HCT116 (cell line): ENCODE measurements at regions of chr16 and their contacts with region 1.

Region 1: DNA sequence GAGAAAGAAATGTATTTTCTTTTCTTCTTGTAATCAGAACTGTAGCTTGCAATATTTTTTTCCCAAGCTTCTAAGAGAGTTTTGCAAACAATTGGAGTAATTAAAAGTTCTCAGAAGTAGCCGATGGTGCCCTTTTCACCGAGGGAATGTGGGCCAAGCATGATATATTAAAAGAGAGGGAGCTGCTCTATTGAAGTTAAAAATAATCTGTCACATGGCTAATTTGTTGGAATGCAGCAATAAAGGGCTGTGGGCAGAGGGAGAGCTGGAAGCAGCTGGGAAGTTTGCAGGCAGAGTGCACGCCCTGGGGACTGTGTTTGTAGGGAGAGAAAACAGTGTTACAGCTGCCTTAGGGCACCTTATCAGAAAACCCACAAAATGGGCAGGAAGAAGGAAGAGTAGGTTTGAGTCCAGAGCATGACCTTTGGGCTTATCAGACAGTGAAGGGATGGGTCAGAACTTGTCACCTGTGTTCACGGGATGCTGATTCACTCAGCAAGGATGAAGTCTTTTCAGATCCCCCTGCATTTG is 18.5 kb upstream of the TERF2 start:
- DNase-seq: peak; percentile 95
- ATAC-seq: peak; percentile 72
- H3K4me3 ChIP-seq: peak overlapping the region in 1 of 2 experiments; percentile 28; a peak in 1 of 4 replicates
- H3K27ac ChIP-seq: peak overlapping the region; percentile 99
- H3K4me1 ChIP-seq: peaks cover 82 to 99% of the 10 kb centered on the region in 2 experiments
- H3K27me3 ChIP-seq: no peaks in the 10 kb centered on the region
- CTCF ChIP-seq: no peak
- POLR2A ChIP-seq: no peak
- RAD21 ChIP-seq: no peak

Region 2: GRCh38 chr16:69386596-69386995 is 17.7 kb before region 1 on chr16:
- CTCF ChIA-PET with region 1: no interaction called
- POLR2A ChIA-PET with region 1: interaction called, 12 read pairs
- RAD21 ChIA-PET with region 1: no interaction called
- intact Hi-C with region 1: no loop called
- DNase-seq: no peak
- ATAC-seq: no peak
- H3K4me3 ChIP-seq: peak overlapping the region; percentile 64 to 78
- H3K27ac ChIP-seq: peak overlapping the region; percentile 83
- H3K4me1 ChIP-seq: peaks cover 28 to 43% of the 10 kb centered on the region in 2 experiments
- H3K27me3 ChIP-seq: no peaks in the 10 kb centered on the region
- CTCF ChIP-seq: no peak
- POLR2A ChIP-seq: no peak
- RAD21 ChIP-seq: no peak

Region 3: DNA sequence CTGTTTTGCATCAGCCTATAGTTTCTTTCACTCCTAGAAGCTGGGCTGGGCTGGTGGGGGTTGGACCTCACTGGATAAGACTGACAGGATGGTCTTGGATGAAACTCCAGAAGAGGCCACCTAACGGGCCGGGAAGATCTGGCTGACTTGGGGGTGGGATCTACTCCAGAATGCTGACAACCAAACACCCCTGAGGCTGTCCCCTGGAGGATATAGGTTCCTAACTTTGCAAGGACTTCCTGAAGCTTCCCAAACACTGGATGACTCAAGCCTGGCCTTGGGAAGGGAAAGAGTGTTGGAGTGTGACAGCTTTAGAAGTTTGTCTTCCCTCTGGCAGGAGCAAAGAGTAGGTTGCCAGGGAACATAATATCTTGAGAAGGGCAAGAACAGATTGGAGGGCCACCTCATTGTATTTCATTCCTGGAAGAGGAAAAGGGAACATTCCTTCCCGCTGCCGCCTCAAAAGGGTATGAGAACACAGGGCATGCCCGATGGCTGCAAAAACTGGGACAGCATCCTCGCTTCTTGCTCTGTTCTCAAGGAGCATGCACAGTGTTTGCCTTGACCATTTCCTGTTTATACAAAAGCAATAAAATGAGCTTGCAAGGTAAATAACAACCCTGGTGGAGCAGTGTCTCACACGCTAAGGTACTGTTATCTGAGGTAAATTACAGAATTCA is 13.3 kb after region 1 on chr16:
- CTCF ChIA-PET with region 1: interaction called, 4 read pairs
- POLR2A ChIA-PET with region 1: interaction called, 22 read pairs
- RAD21 ChIA-PET with region 1: no interaction called
- intact Hi-C with region 1: no loop called
- DNase-seq: no peak
- ATAC-seq: peak; percentile 74
- H3K4me3 ChIP-seq: no peak overlapping the region
- H3K27ac ChIP-seq: peak overlapping the region; percentile 99
- H3K4me1 ChIP-seq: peaks cover 60 to 73% of the 10 kb centered on the region in 2 experiments
- H3K27me3 ChIP-seq: no peaks in the 10 kb centered on the region
- CTCF ChIP-seq: no peak
- POLR2A ChIP-seq: peak; percentile 45
- RAD21 ChIP-seq: no peak

Region 4: GRCh38 chr16:69424053-69424934 is 20.0 kb after region 1 on chr16 and contains the start of gene CYB5B:
- CTCF ChIA-PET with region 1: no interaction called
- POLR2A ChIA-PET with region 1: interaction called, 18 read pairs
- RAD21 ChIA-PET with region 1: interaction called in 1 of 2 experiments, 3 read pairs
- intact Hi-C with region 1: no loop called
- DNase-seq: peak; percentile 100
- ATAC-seq: peak; percentile 91
- H3K4me3 ChIP-seq: peak within 1 kb of the TSS; percentile 82 to 99
- H3K27ac ChIP-seq: peak within 1 kb of the TSS; percentile 90
- H3K4me1 ChIP-seq: peaks cover 52 to 63% of the 10 kb centered on the region in 2 experiments
- H3K27me3 ChIP-seq: no peaks in the 10 kb centered on the region
- CTCF ChIP-seq: no peak
- POLR2A ChIP-seq: peak; percentile 76
- RAD21 ChIP-seq: no peak
- total RNA-seq, gene CYB5B: 689 TPM